Mucosa of descending colon (tissue), 3 donors: ENCODE measurements at regions of chr5 and their contacts with region 1.

Region 1: GRCh38 chr5:78803353-78803752 is 154.8 kb upstream of the LHFPL2 start:
- DNase-seq: peak; percentile 20 to 70 (median 46)
- ATAC-seq: peak; percentile 51
- H3K4me3 ChIP-seq: no peak overlapping the region
- H3K4me1 ChIP-seq: no peaks in the 10 kb centered on the region
- CTCF ChIP-seq: no peak

Region 2: GRCh38 chr5:78886341-78887230 is 83.2 kb after region 1 on chr5:
- intact Hi-C with region 1: loop called in 1 of 2 experiments (anchors 5 kb)
- DNase-seq: no peak
- ATAC-seq: no peak
- H3K4me3 ChIP-seq: no peak overlapping the region
- H3K4me1 ChIP-seq: no peaks in the 10 kb centered on the region
- CTCF ChIP-seq: no peak

Region 3: GRCh38 chr5:79495319-79495718 is 692.0 kb after region 1 on chr5:
- intact Hi-C with region 1: no loop called
- DNase-seq: no peak
- ATAC-seq: no peak
- H3K4me3 ChIP-seq: no peak overlapping the region
- H3K4me1 ChIP-seq: no peaks in the 10 kb centered on the region
- CTCF ChIP-seq: no peak